Naive thymus-derived CD4-positive, alpha-beta T cell (primary cell): ENCODE measurements at regions of chr2 and their contacts with region 1.

Region 1: GRCh38 chr2:233267516-233268245 is 16.2 kb downstream of the ATG16L1 start:
- DNase-seq: peak; percentile 49 to 95 (median 91)
- ATAC-seq: peak; percentile 97
- H3K4me3 ChIP-seq: peak overlapping the region; percentile 40
- H3K4me3 Mint-ChIP-seq: peak overlapping the region; percentile 38 to 84 (median 76)
- H3K27ac ChIP-seq: peak overlapping the region; percentile 79
- H3K27ac Mint-ChIP-seq: peak overlapping the region; percentile 95 to 100 (median 99)
- H3K4me1 ChIP-seq: peaks cover 57 to 62% of the 10 kb centered on the region in 2 donors
- H3K4me1 Mint-ChIP-seq: peaks cover 39 to 81% (median 75%) of the 10 kb centered on the region in 7 donors
- H3K27me3 ChIP-seq: no peaks in the 10 kb centered on the region
- H3K27me3 Mint-ChIP-seq: no peaks in the 10 kb centered on the region

Region 2: GRCh38 chr2:232550354-232551249 is 717.1 kb before region 1 on chr2 and contains the starts of genes EIF4E2 and TIGD1:
- CTCF ChIA-PET with region 1: no interaction called
- POLR2A ChIA-PET with region 1: no interaction called
- intact Hi-C with region 1: loop called (anchors 2 to 5 kb)
- DNase-seq: peak; percentile 82 to 93 (median 90)
- ATAC-seq: peak; percentile 91
- H3K4me3 ChIP-seq: peak within 1 kb of the TSS; percentile 88
- H3K4me3 Mint-ChIP-seq: peak within 1 kb of the TSS; percentile 91 to 100 (median 100)
- H3K27ac ChIP-seq: peak within 1 kb of the TSS; percentile 92
- H3K27ac Mint-ChIP-seq: peak within 1 kb of the TSS; percentile 97 to 100 (median 100)
- H3K4me1 ChIP-seq: peaks cover 15 to 36% of the 10 kb centered on the region in 2 donors
- H3K4me1 Mint-ChIP-seq: peaks cover 53 to 86% (median 83%) of the 10 kb centered on the region in 7 donors
- H3K27me3 ChIP-seq: no peaks in the 10 kb centered on the region
- H3K27me3 Mint-ChIP-seq: no peaks in the 10 kb centered on the region
- total RNA-seq, gene EIF4E2: 51.9 to 77.6 (median 61.6) TPM
- total RNA-seq, gene TIGD1: 9.7 to 23.4 (median 19.3) TPM

Region 3: DNA sequence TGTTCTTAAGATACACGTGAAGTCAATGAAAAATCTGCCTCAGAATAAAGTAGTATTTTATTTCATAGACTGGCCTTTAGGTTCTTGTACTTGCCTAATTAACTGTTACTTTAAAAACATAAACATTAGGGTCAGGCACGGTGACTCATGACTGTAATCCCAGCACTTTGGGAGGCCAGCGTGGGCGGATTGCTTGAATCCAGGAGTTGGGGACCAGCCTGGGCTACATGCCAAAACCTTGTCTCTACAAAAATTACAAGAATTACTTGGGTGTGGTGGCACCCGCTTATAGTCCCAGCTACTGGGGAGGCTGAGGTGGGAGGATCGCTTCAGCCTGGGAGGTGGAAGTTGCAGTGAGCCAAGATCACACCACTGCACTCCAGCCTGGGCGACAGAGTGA is 413.6 kb before region 1 on chr2:
- CTCF ChIA-PET with region 1: no interaction called
- POLR2A ChIA-PET with region 1: no interaction called
- intact Hi-C with region 1: loop called in 1 of 2 experiments (anchors 1 kb)
- DNase-seq: no peak
- ATAC-seq: no peak
- H3K4me3 ChIP-seq: no peak overlapping the region
- H3K4me3 Mint-ChIP-seq: no peak overlapping the region
- H3K27ac ChIP-seq: no peak overlapping the region
- H3K27ac Mint-ChIP-seq: no peak overlapping the region
- H3K4me1 ChIP-seq: no peaks in the 10 kb centered on the region
- H3K4me1 Mint-ChIP-seq: peaks cover 0 to 5% (median 0%) of the 10 kb centered on the region in 7 donors
- H3K27me3 ChIP-seq: no peaks in the 10 kb centered on the region
- H3K27me3 Mint-ChIP-seq: no peaks in the 10 kb centered on the region

Region 4: GRCh38 chr2:233331536-233331935 is 63.9 kb after region 1 on chr2:
- CTCF ChIA-PET with region 1: interaction called, 8 read pairs
- POLR2A ChIA-PET with region 1: interaction called, 41 read pairs
- intact Hi-C with region 1: loop called (anchors 1 kb)
- DNase-seq: peak; percentile 45 to 89 (median 83)
- ATAC-seq: peak; percentile 96
- H3K4me3 ChIP-seq: peak overlapping the region; percentile 17
- H3K4me3 Mint-ChIP-seq: peak overlapping the region; percentile 65 to 82 (median 73)
- H3K27ac ChIP-seq: peak overlapping the region; percentile 75
- H3K27ac Mint-ChIP-seq: peak overlapping the region; percentile 94 to 99 (median 98)
- H3K4me1 ChIP-seq: peaks cover 46 to 58% of the 10 kb centered on the region in 2 donors
- H3K4me1 Mint-ChIP-seq: peaks cover 33 to 64% (median 51%) of the 10 kb centered on the region in 7 donors
- H3K27me3 ChIP-seq: no peaks in the 10 kb centered on the region
- H3K27me3 Mint-ChIP-seq: peaks cover 0 to 2% (median 0%) of the 10 kb centered on the region in 5 donors

Region 5: GRCh38 chr2:233418761-233419625 is 151.3 kb after region 1 on chr2:
- CTCF ChIA-PET with region 1: no interaction called
- POLR2A ChIA-PET with region 1: interaction called, 8 read pairs
- intact Hi-C with region 1: loop called in 1 of 2 experiments (anchors 1 kb)
- DNase-seq: peak in 6 of 9 donors; percentile 40 to 69 (median 50)
- ATAC-seq: peak; percentile 74
- H3K4me3 ChIP-seq: peak overlapping the region; percentile 70
- H3K4me3 Mint-ChIP-seq: peak overlapping the region; percentile 84 to 99 (median 92)
- H3K27ac ChIP-seq: peak overlapping the region; percentile 80
- H3K27ac Mint-ChIP-seq: peak overlapping the region; percentile 86 to 99 (median 97)
- H3K4me1 ChIP-seq: peaks cover 65 to 93% of the 10 kb centered on the region in 2 donors
- H3K4me1 Mint-ChIP-seq: peaks cover 78 to 100% (median 96%) of the 10 kb centered on the region in 7 donors
- H3K27me3 ChIP-seq: no peaks in the 10 kb centered on the region
- H3K27me3 Mint-ChIP-seq: no peaks in the 10 kb centered on the region